AG04450 (cell line): ENCODE measurements at regions of chr18 and their contacts with region 1.

Region 1: GRCh38 chr18:50266248-50266704 is at the start of gene CFAP53:
- DNase-seq: peak; percentile 60
- H3K4me3 ChIP-seq: peak within 1 kb of the TSS; percentile 88
- H3K27ac ChIP-seq: no peak within 1 kb of the TSS
- H3K27me3 ChIP-seq: no peaks in the 10 kb centered on the region
- CTCF ChIP-seq: no peak
- polyA plus RNA-seq, gene CFAP53: 0.24 and 0.26 TPM in 2 replicates

Region 2: GRCh38 chr18:50203801-50204604 is 62.3 kb before region 1 on chr18:
- CTCF ChIA-PET with region 1: no interaction called
- POLR2A ChIA-PET with region 1: no interaction called
- DNase-seq: no peak
- H3K4me3 ChIP-seq: no peak overlapping the region
- H3K27ac ChIP-seq: no peak overlapping the region
- H3K27me3 ChIP-seq: peaks cover 5% of the 10 kb centered on the region
- CTCF ChIP-seq: peak; percentile 55

Region 3: DNA sequence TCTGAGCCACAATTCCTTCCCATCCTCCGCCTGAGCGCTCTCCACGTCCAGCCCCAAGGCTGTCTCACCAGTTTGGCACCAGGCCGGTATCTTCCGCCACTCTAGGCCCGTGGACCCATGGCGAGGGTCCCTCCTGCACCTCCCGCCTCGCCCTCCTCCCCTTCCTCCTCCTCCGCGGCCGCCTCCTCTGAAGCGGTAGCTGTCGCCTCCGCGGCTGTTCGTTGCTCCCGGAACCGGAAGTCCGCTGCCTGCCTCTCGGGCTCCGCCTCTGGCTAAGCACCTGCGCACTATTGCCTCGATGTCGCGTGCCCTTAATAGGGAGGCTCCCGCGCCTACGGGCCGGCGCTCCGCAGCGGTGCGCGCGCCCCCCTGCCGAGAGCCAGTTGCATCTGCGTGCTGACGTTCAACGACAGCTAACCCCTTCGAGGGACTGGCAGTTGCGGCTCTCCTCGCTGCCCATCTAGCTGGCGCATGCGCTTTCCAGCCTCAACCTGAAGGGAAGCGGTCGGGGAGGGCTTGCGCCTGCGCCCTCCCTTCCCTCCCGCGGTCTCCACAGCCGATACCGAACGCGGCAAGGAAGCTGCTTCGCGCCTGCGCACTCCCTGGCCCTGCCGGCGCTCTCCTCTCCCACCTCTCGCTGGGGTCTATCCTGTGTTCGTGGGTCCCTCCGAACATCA is 15.2 kb after region 1 on chr18 and contains the start of gene MBD1:
- CTCF ChIA-PET with region 1: interaction called, 11 read pairs
- POLR2A ChIA-PET with region 1: interaction called, 11 read pairs
- DNase-seq: peak; percentile 97
- H3K4me3 ChIP-seq: peak within 1 kb of the TSS; percentile 98
- H3K27ac ChIP-seq: peak within 1 kb of the TSS; percentile 91
- H3K27me3 ChIP-seq: no peaks in the 10 kb centered on the region
- CTCF ChIP-seq: peak; percentile 34; the same call in 1 of the 2 replicates
- polyA plus RNA-seq, gene MBD1: 35.3 and 39.5 TPM in 2 replicates